ENCODE measurements at regions of chr16 and their contacts with region 1.

Region 1: GRCh38 chr16:1705688-1706385 is at the start of gene MAPK8IP3:
- DNase-seq: peak; percentile 43
- ATAC-seq: peak; percentile 93
- H3K4me3 ChIP-seq: peak within 1 kb of the TSS; percentile 97
- H3K27ac ChIP-seq: peak within 1 kb of the TSS; percentile 84
- H3K4me1 ChIP-seq: peaks cover 14% of the 10 kb centered on the region
- H3K27me3 ChIP-seq: no peaks in the 10 kb centered on the region
- CTCF ChIP-seq: peak; percentile 66 to 99 (median 90); a peak in 4 of 6 replicates
- EP300 ChIP-seq: 0 out of 4 replicates have a peak, but pooled peaks of 1 of the 2 experiments have one; percentile 40
- POLR2A ChIP-seq: peak; percentile 96
- RAD21 ChIP-seq: 0 out of 2 replicates have a peak, but pooled peaks have one; percentile 15
- polyA plus RNA-seq, gene MAPK8IP3: 0.06 to 0.31 TPM

Region 2: DNA sequence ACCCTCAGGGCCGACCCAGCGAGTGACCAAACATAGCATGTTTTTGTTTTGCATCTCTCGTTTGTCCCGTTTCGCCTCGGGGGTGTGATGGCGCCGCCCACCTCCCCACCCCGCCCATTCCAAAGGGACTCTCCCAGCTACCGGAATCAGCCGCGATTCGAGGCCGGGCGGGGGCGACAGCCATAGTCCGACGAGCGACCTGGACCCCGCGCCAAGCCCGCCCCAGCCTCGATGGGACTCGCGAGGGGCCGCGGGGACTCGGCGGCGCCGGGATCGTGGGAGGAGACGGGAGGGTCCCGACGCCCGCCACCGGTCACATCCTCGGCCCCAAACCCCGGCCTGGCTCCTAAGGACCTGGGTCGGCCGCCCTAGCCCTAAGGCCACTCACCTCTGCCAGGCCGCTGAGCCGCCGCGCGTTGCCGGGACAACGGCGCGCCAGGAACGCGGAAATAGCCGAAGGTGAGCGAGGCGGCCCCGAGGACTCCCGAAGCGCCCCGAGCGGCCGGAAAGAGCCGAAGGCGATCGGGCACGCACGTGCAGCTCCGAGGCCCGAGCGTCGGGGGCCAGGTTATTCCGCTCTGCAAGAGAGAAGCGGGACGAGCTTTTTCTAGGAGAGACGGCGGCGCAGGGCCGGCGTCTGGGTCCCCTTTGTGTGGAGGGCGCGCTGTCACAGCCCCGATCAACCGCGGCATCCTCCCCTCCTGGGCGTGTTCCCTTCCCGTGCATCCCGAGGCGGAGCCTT is 95.4 kb before region 1 on chr16:
- CTCF ChIA-PET with region 1: interaction called, 3 read pairs
- POLR2A ChIA-PET with region 1: interaction called, 13 read pairs
- RAD21 ChIA-PET with region 1: interaction called, 3 read pairs
- SMC1A ChIA-PET with region 1: no interaction called
- in situ Hi-C with region 1: no loop called
- intact Hi-C with region 1: no loop called
- DNase-seq: peak; percentile 41
- ATAC-seq: peak; percentile 82
- H3K4me3 ChIP-seq: peak overlapping the region; percentile 71
- H3K27ac ChIP-seq: no peak overlapping the region
- H3K4me1 ChIP-seq: peaks cover 20% of the 10 kb centered on the region
- H3K27me3 ChIP-seq: peaks cover 0 to 4% of the 10 kb centered on the region in 2 experiments; a peak in 1 of 4 replicates
- CTCF ChIP-seq: no peak
- EP300 ChIP-seq: no peak
- POLR2A ChIP-seq: 0 out of 2 replicates have a peak, but pooled peaks have one; percentile 42
- RAD21 ChIP-seq: no peak

Region 3: DNA sequence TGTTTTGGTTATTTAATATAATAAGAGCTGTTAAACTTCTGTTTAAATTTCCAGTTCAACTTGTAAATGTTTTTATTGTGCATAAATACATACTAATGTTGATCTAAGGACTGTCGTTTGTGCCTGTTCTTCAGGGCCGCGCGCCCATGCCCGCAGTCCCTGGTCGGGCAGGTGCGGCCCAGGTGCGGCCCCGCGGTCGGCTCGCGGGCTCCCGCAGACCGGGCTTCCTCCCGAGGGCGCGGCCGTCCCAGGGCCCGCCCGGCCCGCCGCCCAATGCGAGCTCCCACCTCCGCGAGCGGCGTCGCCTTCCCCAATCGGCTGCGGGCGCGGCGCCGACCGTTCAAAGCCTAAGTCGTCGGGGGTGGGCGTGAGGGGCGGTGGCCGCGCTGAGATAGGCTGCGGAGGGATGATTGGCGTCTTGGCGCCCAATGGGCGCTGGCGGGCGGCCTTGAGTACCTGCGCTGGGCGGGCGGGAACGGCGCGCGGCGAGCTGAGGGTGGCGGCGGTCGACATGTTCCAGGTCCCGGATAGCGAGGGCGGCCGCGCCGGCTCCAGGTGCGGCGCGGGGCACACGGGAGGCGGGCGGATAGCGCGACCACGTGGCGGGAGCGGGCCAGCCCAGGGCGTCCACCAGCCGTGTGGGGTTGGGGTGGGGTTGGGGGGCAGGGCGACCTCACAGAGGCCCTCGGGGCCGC is 27.9 kb before region 1 on chr16 and contains the start of gene JPT2:
- CTCF ChIA-PET with region 1: interaction called, 14 read pairs
- POLR2A ChIA-PET with region 1: interaction called, 15 read pairs
- RAD21 ChIA-PET with region 1: interaction called, 15 read pairs
- SMC1A ChIA-PET with region 1: no interaction called
- in situ Hi-C with region 1: no loop called
- intact Hi-C with region 1: loop called (anchors 1 kb)
- DNase-seq: peak; percentile 84
- ATAC-seq: peak; percentile 99
- H3K4me3 ChIP-seq: peak within 1 kb of the TSS; percentile 75
- H3K27ac ChIP-seq: peak within 1 kb of the TSS; percentile 76
- H3K4me1 ChIP-seq: no peaks in the 10 kb centered on the region; the same call in 1 of the 2 replicates
- H3K27me3 ChIP-seq: no peaks in the 10 kb centered on the region
- CTCF ChIP-seq: 0 out of 6 replicates have a peak, but pooled peaks of 1 of the 3 experiments have one; percentile 5
- EP300 ChIP-seq: no peak
- POLR2A ChIP-seq: peak; percentile 85
- RAD21 ChIP-seq: no peak
- polyA plus RNA-seq, gene JPT2: 15.6 to 26.7 TPM

Region 4: GRCh38 chr16:1721372-1721771 is 15.5 kb after region 1 on chr16:
- CTCF ChIA-PET with region 1: interaction called, 7 read pairs
- POLR2A ChIA-PET with region 1: interaction called, 5 read pairs
- RAD21 ChIA-PET with region 1: interaction called, 5 read pairs
- SMC1A ChIA-PET with region 1: interaction called, 4 read pairs
- in situ Hi-C with region 1: no loop called
- intact Hi-C with region 1: loop called (anchors 2 kb)
- DNase-seq: no peak
- ATAC-seq: no peak
- H3K4me3 ChIP-seq: no peak overlapping the region
- H3K27ac ChIP-seq: no peak overlapping the region
- H3K4me1 ChIP-seq: peaks cover 45% of the 10 kb centered on the region
- H3K27me3 ChIP-seq: no peaks in the 10 kb centered on the region
- CTCF ChIP-seq: no peak
- EP300 ChIP-seq: no peak
- POLR2A ChIP-seq: no peak
- RAD21 ChIP-seq: no peak

Region 5: GRCh38 chr16:1772736-1773584 is 67.1 kb after region 1 on chr16 and contains the starts of genes EME2 and MRPS34:
- CTCF ChIA-PET with region 1: interaction called, 4 read pairs
- POLR2A ChIA-PET with region 1: interaction called, 4 read pairs
- RAD21 ChIA-PET with region 1: no interaction called
- SMC1A ChIA-PET with region 1: no interaction called
- in situ Hi-C with region 1: loop called (anchors 5 kb)
- intact Hi-C with region 1: loop called (anchors 5 kb)
- DNase-seq: peak; percentile 17
- ATAC-seq: peak; percentile 71
- H3K4me3 ChIP-seq: peak within 1 kb of the TSS; percentile 100
- H3K27ac ChIP-seq: peak within 1 kb of the TSS; percentile 89
- H3K4me1 ChIP-seq: peaks cover 15% of the 10 kb centered on the region
- H3K27me3 ChIP-seq: no peaks in the 10 kb centered on the region
- CTCF ChIP-seq: peak; percentile 71 to 81 (median 73)
- EP300 ChIP-seq: no peak
- POLR2A ChIP-seq: peak; percentile 92
- RAD21 ChIP-seq: peak; percentile 29; the same call in 1 of the 2 replicates
- polyA plus RNA-seq, gene EME2: 0.29 to 0.80 TPM
- polyA plus RNA-seq, gene MRPS34: 3.6 to 17.9 TPM

Region 6: DNA sequence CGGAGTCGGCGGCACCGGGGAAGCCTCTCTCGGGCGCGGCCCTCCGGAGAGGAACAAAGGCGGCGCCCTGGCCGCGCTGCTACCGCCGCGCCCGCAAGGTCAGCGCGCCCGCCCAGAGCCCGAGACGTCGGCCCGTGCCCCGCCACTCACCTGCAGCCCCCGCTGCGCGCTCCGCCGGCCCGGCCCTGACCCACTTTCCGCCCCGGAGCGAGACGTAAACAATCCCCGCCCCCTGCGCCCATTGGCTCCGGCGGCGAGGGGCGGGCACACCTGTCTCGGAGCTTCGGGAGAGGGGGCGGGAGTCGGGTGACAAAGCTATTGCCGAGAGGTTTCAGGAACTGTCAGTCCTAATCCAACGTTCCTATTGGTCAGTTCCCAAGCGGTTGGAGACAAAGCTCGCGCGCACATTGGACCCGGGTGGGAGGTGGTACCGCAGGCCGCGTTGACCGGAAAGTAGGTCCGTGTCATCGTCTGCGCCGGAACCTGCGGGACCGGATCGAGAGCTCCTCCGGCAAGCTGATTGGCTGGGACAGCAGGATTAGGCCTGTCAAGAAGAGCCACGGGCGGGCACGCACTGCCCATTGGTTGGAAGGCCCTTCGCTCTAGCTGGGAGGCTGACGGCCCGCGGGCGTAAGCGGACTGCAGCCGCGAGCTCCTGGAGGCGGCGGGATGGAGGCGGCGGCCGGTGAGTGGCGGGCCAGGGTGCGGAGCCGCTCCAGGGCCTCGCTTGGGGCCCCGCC is 76.7 kb after region 1 on chr16 and contains the starts of genes NUBP2 and SPSB3:
- CTCF ChIA-PET with region 1: interaction called, 12 read pairs
- POLR2A ChIA-PET with region 1: interaction called, 7 read pairs
- RAD21 ChIA-PET with region 1: interaction called, 7 read pairs
- SMC1A ChIA-PET with region 1: interaction called, 3 read pairs
- in situ Hi-C with region 1: no loop called
- intact Hi-C with region 1: no loop called
- DNase-seq: peak; percentile 100
- ATAC-seq: peak; percentile 96
- H3K4me3 ChIP-seq: peak within 1 kb of the TSS; percentile 94
- H3K27ac ChIP-seq: peak within 1 kb of the TSS; percentile 68
- H3K4me1 ChIP-seq: peaks cover 6% of the 10 kb centered on the region; the same call in 1 of the 2 replicates
- H3K27me3 ChIP-seq: no peaks in the 10 kb centered on the region
- CTCF ChIP-seq: no peak
- EP300 ChIP-seq: no peak
- POLR2A ChIP-seq: peak; percentile 81
- RAD21 ChIP-seq: no peak
- polyA plus RNA-seq, gene NUBP2: 1.9 to 5.9 TPM
- polyA plus RNA-seq, gene SPSB3: 0.31 to 1.5 TPM